ENCODE measurements at regions of chr17 and their contacts with region 1.

Region 1: DNA sequence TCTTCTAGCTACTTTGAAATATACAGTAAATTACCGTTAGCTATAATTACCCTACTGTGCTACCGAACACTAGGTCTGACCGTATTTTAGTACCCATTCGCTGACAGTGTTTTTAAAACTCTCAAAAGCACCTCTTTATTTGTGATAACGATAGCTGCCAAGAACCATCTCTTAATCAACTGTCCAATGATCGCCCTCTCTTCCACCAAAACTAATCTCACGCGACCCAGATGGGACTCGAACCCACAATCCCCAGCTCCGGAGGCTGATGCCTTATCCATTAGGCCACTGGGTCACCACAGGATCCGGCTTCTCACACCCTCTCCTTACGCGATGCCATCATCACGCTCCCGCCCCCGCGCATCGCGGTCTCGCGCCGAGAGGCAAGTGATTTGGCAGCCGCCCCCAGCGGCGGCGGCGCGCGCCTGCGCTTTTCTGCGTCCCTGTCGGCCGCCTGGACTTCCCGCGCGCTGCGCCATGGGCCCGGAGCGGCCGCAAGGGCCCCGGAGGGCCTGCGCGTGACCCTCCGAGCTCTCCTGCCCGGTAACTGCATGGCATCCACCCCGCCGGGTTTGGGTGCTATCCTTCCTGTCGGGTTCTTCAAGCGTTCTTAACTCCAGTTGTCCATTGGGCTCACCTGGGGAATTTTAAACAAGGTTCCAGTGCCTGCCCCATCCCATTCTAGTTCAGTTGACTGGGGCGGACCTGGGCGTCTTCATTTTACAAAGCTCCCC is 15.7 kb upstream of the KPNA2 start:
- DNase-seq: peak; percentile 97
- H3K4me3 ChIP-seq: peak overlapping the region; percentile 45 to 66 (median 56)
- H3K27ac ChIP-seq: peak overlapping the region; percentile 84 to 92 (median 88)
- H3K4me1 ChIP-seq: peaks cover 0 to 6% (median 5%) of the 10 kb centered on the region in 4 donors
- H3K27me3 ChIP-seq: no peaks in the 10 kb centered on the region
- CTCF ChIP-seq: peak in 2 of 4 experiments; percentile 41 to 50
- EP300 ChIP-seq: peak in 1 of 4 donors; percentile 7
- POLR2A ChIP-seq: peak in 1 of 2 donors; percentile 12

Region 2: GRCh38 chr17:67959288-67959900 is 60.4 kb before region 1 on chr17:
- intact Hi-C with region 1: loop called (anchors 1 kb)
- DNase-seq: no peak
- H3K4me3 ChIP-seq: no peak overlapping the region
- H3K27ac ChIP-seq: no peak overlapping the region
- H3K4me1 ChIP-seq: no peaks in the 10 kb centered on the region
- H3K27me3 ChIP-seq: no peaks in the 10 kb centered on the region
- CTCF ChIP-seq: no peak
- EP300 ChIP-seq: no peak
- POLR2A ChIP-seq: no peak

Region 3: GRCh38 chr17:67993596-67994361 is 26.1 kb before region 1 on chr17:
- intact Hi-C with region 1: loop called (anchors 1 kb)
- DNase-seq: peak; percentile 90
- H3K4me3 ChIP-seq: peak overlapping the region; percentile 64 to 78 (median 70)
- H3K27ac ChIP-seq: peak overlapping the region; percentile 94 to 96 (median 96)
- H3K4me1 ChIP-seq: peaks cover 0 to 33% (median 23%) of the 10 kb centered on the region in 4 donors
- H3K27me3 ChIP-seq: no peaks in the 10 kb centered on the region
- CTCF ChIP-seq: no peak
- EP300 ChIP-seq: no peak
- POLR2A ChIP-seq: peak in 1 of 2 donors; percentile 41

Region 4: GRCh38 chr17:68057531-68057952 is 37.7 kb after region 1 on chr17:
- intact Hi-C with region 1: no loop called
- DNase-seq: no peak
- H3K4me3 ChIP-seq: no peak overlapping the region
- H3K27ac ChIP-seq: no peak overlapping the region
- H3K4me1 ChIP-seq: peaks cover 0 to 11% (median 6%) of the 10 kb centered on the region in 4 donors
- H3K27me3 ChIP-seq: no peaks in the 10 kb centered on the region
- CTCF ChIP-seq: no peak
- EP300 ChIP-seq: no peak
- POLR2A ChIP-seq: no peak